ENCODE measurements at regions of chr19 and their contacts with region 1.

Region 1: DNA sequence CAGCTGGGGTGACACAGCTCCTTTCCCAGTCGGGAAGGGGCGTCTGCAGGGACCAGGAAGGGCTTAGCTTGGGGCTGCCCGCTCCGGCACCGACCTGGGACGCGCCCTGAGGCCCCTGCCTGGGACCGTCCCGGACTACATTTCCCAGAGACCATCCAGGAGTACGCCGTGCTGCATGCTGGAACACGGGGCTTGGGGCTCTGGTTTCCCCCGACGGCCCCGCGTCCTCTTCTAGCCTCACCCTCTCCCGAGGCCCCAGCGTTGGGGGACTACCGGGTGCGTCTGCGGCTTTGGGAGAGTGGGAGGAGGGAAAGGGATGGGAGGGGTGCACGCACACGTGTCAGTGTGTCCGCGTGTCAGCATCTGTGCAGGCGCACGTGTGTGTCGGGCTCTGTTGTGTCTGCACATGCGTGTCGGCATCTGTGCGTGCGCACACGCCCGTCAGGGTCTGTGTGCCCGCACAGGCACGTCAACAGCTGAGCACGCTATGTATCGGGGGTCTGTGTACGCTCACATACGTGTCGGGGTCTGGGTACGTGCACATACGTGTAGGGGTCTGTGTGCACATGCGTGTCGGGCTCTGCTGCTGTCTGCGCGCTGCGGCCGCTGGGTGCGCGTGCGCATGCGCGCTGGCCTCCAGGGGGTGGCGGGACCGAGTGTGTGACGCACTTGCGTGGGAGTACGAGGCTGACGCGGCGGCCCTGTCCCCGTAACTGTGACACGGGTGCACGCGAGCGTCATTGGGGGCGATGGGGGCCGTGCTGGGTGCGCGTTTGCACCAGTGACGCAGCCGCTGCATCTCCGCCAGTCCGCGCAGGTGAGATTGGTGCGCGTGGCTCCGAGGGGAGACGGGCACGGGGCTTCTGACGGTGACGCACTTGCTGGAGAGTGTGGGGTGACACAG is at the start of gene ZNF331:
- DNase-seq: peak in 1 of 2 experiments; percentile 81
- H3K4me3 ChIP-seq: peak within 1 kb of the TSS; percentile 38 to 71 (median 67)
- H3K27ac ChIP-seq: 0 out of 2 replicates have a peak within 1 kb of the TSS, but pooled peaks have one; percentile 38
- H3K4me1 ChIP-seq: peaks cover 0 to 5% (median 0%) of the 10 kb centered on the region in 4 experiments; a peak in 2 of 7 replicates
- H3K27me3 ChIP-seq: no peaks in the 10 kb centered on the region
- CTCF ChIP-seq: peak in 2 of 3 experiments; percentile 2 to 25; a peak in 2 of 4 replicates
- EP300 ChIP-seq: no peak
- POLR2A ChIP-seq: no peak
- RAD21 ChIP-seq: no peak
- total RNA-seq, gene ZNF331: 36.7 and 44.1 TPM in 2 replicates

Region 2: DNA sequence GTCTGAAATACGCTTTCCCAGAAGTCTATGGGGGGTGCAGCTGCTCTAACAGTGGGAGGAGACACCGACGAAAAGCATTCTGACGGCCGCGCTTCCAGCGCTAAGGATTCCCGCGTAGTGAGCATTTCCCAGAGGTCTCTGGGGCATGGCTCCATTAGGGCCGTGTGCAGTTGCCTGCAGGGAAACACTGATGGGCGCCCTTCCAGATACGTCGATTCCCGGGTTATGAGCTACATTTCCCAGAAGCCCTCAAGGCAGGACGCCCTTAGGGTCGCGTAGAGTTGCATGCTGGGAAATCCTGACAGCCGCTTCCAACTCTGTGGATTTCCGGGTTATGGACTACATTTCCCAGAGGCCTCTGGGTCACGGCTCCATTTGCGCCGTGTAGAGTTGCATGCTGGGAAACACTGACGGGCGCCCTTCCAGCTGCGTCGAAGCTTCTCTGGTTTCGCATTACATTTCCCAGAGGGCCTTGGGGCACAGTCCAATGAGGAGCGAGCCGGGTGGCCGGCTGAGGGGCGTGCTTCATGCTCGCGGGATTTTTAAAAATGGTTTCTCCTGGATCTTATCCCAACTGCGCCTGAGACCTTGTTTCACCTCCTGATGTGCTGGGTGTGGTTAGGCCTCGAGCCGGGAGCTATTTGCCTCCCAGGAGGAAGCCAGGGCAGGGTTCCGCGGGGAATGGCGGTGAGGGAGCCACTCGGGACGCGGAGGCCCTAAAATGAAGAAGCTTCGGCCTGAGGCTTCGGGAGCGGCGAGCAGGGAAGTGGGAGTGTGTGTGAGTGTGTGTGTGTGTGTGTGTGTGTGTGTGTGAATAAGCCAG is 17.0 kb before region 1 on chr19:
- CTCF ChIA-PET with region 1: no interaction called
- POLR2A ChIA-PET with region 1: interaction called, 13 read pairs
- DNase-seq: peak; percentile 86 to 96
- H3K4me3 ChIP-seq: peak overlapping the region; percentile 82 to 98 (median 91)
- H3K27ac ChIP-seq: peak overlapping the region; percentile 57; the same call in 1 of the 2 replicates
- H3K4me1 ChIP-seq: peaks cover 0 to 9% (median 2%) of the 10 kb centered on the region in 4 experiments; a peak in 4 of 7 replicates
- H3K27me3 ChIP-seq: peaks cover 0 to 3% (median 1%) of the 10 kb centered on the region in 4 experiments; a peak in 2 of 7 replicates
- CTCF ChIP-seq: no peak
- EP300 ChIP-seq: 0 out of 3 replicates have a peak, but pooled peaks of 1 of the 2 experiments have one; percentile 5
- POLR2A ChIP-seq: peak in 1 of 2 experiments; percentile 50; a peak in 2 of 3 replicates
- RAD21 ChIP-seq: no peak

Measured in H1 (cell line).